CD8-positive, alpha-beta T cell (primary cell): ENCODE measurements at regions of chr7 and their contacts with region 1.

Region 1: DNA sequence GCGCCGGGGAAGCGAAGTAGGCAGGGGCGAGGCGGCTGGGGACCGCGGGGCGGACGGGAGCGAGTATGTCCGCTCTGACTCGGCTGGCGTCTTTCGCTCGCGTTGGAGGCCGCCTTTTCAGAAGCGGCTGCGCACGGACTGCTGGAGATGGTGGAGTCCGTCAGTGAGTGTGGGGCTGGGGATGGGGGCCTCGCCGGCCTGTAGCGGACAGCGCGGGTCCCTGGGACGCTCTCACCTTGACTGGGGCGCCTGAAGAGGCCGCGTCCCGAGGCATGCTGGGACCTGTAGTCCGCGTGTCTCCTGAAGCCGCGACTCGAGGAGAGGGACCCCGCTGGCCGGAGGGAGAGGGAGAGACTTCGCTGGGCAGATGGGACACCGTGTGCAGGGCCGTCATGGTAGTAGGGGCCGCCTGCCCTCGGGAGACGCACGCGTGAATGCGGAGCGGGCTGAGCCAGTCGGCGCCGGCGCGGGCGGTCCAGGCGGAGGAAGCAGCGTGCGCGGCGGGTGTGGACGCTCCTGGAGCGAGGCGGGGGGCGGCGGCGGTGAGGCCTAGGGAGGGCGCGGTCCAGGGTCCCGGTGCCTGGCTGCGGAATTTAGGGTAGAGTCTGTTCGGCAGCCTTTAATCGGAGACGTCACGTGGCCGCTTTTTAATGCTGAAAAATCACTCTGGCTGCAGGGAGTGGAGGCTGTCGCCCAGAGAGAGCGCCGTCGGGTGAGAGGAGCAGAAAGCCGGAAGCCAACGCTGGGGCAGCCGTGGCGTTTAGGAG is at the start of gene NDUFB2:
- DNase-seq: peak in 8 of 9 experiments; percentile 30 to 85 (median 64)
- ATAC-seq: peak; percentile 87
- H3K4me3 ChIP-seq: peak within 1 kb of the TSS; percentile 96 to 100
- H3K4me3 Mint-ChIP-seq: peak within 1 kb of the TSS; percentile 97
- H3K27ac ChIP-seq: peak within 1 kb of the TSS; percentile 96
- H3K27ac Mint-ChIP-seq: peak within 1 kb of the TSS; percentile 99
- H3K4me1 ChIP-seq: peaks cover 19% of the 10 kb centered on the region
- H3K4me1 Mint-ChIP-seq: peaks cover 45% of the 10 kb centered on the region
- H3K27me3 ChIP-seq: no peaks in the 10 kb centered on the region
- H3K27me3 Mint-ChIP-seq: no peaks in the 10 kb centered on the region
- CTCF ChIP-seq: no peak
- total RNA-seq, gene NDUFB2: 83.9 to 84.5 TPM

Region 2: DNA sequence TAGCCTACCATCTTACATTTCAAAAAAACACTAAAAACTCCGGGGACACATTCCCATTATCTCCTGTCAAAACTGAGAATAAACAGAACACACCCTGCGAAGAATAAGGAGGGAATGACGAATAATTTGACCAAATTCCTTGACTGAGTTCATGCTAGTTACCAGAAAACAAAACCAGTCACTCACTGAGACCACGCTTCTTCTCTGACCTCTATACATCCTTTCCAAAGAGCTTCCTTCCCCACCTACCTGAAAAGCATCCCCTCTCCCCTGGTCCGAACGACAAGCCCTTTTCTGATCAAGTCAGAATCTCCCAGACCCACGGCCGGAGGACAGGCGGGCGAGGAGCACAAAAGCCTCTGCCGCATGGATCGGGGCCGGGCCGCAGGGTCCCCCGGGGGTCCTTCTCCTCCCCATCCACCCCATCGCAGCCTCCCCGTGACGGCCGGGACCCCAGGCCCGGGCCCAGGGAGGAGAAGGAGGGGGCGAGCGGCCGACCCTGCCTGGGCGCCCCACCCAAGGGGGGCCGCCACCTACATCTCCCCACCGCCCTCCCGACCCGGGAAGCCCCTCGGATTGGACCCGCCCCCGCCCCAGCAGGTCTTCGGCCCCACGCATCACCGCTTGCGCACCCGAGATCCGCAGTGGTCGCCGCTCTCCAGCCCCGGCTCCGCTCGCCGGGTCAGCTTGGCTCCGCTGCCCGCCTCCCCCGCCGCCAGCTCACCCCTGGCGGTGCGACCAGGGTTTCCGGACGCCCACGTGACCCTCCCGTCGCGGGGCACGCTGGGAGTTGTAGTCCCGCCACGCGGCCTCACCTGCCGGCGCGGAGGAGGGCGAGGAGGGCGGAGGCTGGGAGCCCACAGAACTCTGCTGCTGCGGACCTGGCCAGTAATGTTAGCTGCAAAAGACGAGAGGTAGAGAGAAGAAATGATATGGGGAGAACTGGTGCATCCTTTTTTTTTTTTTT is 298.8 kb before region 1 on chr7 and contains the start of gene SLC37A3:
- CTCF ChIA-PET with region 1: no interaction called
- POLR2A ChIA-PET with region 1: no interaction called
- intact Hi-C with region 1: loop called in 1 of 2 experiments (anchors 10 kb)
- DNase-seq: peak; percentile 70 to 91 (median 87)
- ATAC-seq: peak; percentile 96
- H3K4me3 ChIP-seq: peak within 1 kb of the TSS; percentile 77 to 84
- H3K4me3 Mint-ChIP-seq: peak within 1 kb of the TSS; percentile 90
- H3K27ac ChIP-seq: peak within 1 kb of the TSS; percentile 48 to 59
- H3K27ac Mint-ChIP-seq: peak within 1 kb of the TSS; percentile 81
- H3K4me1 ChIP-seq: peaks cover 14% of the 10 kb centered on the region
- H3K4me1 Mint-ChIP-seq: peaks cover 28% of the 10 kb centered on the region
- H3K27me3 ChIP-seq: no peaks in the 10 kb centered on the region
- H3K27me3 Mint-ChIP-seq: no peaks in the 10 kb centered on the region
- CTCF ChIP-seq: peak; percentile 25
- total RNA-seq, gene SLC37A3: 28.4 to 32.1 TPM

Region 3: GRCh38 chr7:140673063-140673773 is 23.6 kb before region 1 on chr7:
- CTCF ChIA-PET with region 1: interaction called, 3 read pairs
- POLR2A ChIA-PET with region 1: interaction called, 5 read pairs
- intact Hi-C with region 1: loop called (anchors 1 kb)
- DNase-seq: peak; percentile 30 to 79 (median 65)
- ATAC-seq: peak; percentile 77
- H3K4me3 ChIP-seq: peak overlapping the region; percentile 56 to 64
- H3K4me3 Mint-ChIP-seq: peak overlapping the region; percentile 88
- H3K27ac ChIP-seq: peak overlapping the region; percentile 68 to 80
- H3K27ac Mint-ChIP-seq: peak overlapping the region; percentile 93
- H3K4me1 ChIP-seq: peaks cover 22% of the 10 kb centered on the region
- H3K4me1 Mint-ChIP-seq: peaks cover 41% of the 10 kb centered on the region
- H3K27me3 ChIP-seq: no peaks in the 10 kb centered on the region
- H3K27me3 Mint-ChIP-seq: no peaks in the 10 kb centered on the region
- CTCF ChIP-seq: no peak

Region 4: DNA sequence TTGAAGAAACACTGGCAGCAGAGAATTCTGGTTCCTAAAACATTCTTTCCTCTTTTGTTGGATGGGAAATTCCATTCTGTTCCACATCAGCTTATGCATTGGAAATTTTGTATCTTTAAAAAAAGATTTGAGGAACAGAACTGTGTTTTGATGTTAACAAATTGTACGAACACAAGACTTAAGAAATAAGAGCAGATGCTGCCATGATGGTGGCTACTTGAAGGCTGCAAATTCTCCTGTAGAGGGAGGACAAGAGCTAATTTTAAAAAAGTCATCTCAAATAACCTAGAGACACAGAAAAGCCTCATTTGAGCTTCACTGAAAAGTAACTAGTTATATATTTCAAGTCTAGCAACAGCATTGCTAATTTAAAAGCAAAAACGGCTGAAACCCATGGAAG is 29.4 kb after region 1 on chr7:
- CTCF ChIA-PET with region 1: interaction called, 9 read pairs
- POLR2A ChIA-PET with region 1: interaction called, 11 read pairs
- intact Hi-C with region 1: loop called (anchors 2 kb)
- DNase-seq: peak in 2 of 9 experiments; percentile 11 to 38
- ATAC-seq: no peak
- H3K4me3 ChIP-seq: no peak overlapping the region
- H3K4me3 Mint-ChIP-seq: no peak overlapping the region
- H3K27ac ChIP-seq: no peak overlapping the region
- H3K27ac Mint-ChIP-seq: no peak overlapping the region
- H3K4me1 ChIP-seq: peaks cover 13% of the 10 kb centered on the region
- H3K4me1 Mint-ChIP-seq: peaks cover 26% of the 10 kb centered on the region
- H3K27me3 ChIP-seq: no peaks in the 10 kb centered on the region
- H3K27me3 Mint-ChIP-seq: no peaks in the 10 kb centered on the region
- CTCF ChIP-seq: peak; percentile 25

Region 5: GRCh38 chr7:141551094-141551781 is 854.4 kb after region 1 on chr7 and contains the start of gene AGK:
- CTCF ChIA-PET with region 1: no interaction called
- POLR2A ChIA-PET with region 1: no interaction called
- intact Hi-C with region 1: loop called in 1 of 2 experiments (anchors 10 kb)
- DNase-seq: peak; percentile 55 to 86 (median 72)
- ATAC-seq: peak; percentile 96
- H3K4me3 ChIP-seq: peak within 1 kb of the TSS; percentile 68 to 82
- H3K4me3 Mint-ChIP-seq: peak within 1 kb of the TSS; percentile 93
- H3K27ac ChIP-seq: peak within 1 kb of the TSS; percentile 34 to 50
- H3K27ac Mint-ChIP-seq: peak within 1 kb of the TSS; percentile 89
- H3K4me1 ChIP-seq: peaks cover 18% of the 10 kb centered on the region
- H3K4me1 Mint-ChIP-seq: peaks cover 31% of the 10 kb centered on the region
- H3K27me3 ChIP-seq: no peaks in the 10 kb centered on the region
- H3K27me3 Mint-ChIP-seq: no peaks in the 10 kb centered on the region
- CTCF ChIP-seq: no peak
- total RNA-seq, gene AGK: 20.5 to 22.6 TPM